Breast epithelium (tissue), 4 donors: ENCODE measurements at regions of chr6 and their contacts with region 1.

Region 1: GRCh38 chr6:89080542-89081422 is at the start of gene PNRC1:
- DNase-seq: peak; percentile 100
- H3K4me3 ChIP-seq: peak within 1 kb of the TSS; percentile 74 to 100 (median 96)
- H3K27ac ChIP-seq: peak within 1 kb of the TSS; percentile 96 to 100
- H3K4me1 ChIP-seq: peaks cover 0 to 3% of the 10 kb centered on the region in 2 donors
- H3K27me3 ChIP-seq: no peaks in the 10 kb centered on the region
- CTCF ChIP-seq: no peak
- POLR2A ChIP-seq: peak; percentile 99
- total RNA-seq, gene PNRC1: 221 to 290 (median 230) TPM

Region 2: DNA sequence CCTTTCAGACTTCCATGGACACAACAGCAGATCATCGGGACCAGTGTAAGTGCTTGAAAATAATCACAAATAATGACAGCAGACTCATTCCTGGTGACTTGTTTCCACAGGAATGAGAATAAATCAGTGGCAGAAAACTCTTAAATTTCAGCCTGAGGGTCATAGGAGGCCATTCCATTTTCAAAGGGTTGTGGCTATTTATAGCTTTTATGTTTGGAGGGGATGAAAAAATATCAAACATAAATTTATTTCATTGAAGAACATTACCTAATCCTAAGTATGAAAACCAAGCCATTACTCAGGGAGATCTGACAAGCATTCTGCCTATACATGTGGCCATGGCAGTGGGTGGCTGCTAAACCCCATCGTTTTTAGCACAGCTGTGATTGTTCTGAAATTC is 741.0 kb before region 1 on chr6:
- intact Hi-C with region 1: no loop called
- DNase-seq: no peak
- H3K4me3 ChIP-seq: no peak overlapping the region
- H3K27ac ChIP-seq: no peak overlapping the region
- H3K4me1 ChIP-seq: no peaks in the 10 kb centered on the region
- H3K27me3 ChIP-seq: no peaks in the 10 kb centered on the region
- CTCF ChIP-seq: no peak
- POLR2A ChIP-seq: no peak

Region 3: DNA sequence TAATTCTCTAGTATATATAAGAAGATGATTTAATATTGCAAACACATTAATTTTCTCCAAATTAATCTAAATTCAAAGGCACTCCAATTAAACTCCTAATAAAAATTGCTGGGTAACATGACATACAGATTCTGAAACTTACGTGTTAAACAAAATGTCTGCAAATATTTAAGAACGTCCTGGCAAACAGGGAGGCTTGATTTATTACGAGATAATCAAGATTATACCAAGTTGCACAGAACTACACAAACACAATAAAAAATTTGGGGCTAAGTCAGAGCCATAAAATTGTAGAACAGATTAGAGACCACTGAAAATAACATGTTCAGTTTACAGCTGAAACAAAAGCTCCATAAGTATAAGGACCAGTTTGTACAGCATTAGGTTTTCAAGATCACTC is 283.8 kb before region 1 on chr6:
- intact Hi-C with region 1: no loop called
- DNase-seq: no peak
- H3K4me3 ChIP-seq: no peak overlapping the region
- H3K27ac ChIP-seq: no peak overlapping the region
- H3K4me1 ChIP-seq: no peaks in the 10 kb centered on the region
- H3K27me3 ChIP-seq: no peaks in the 10 kb centered on the region
- CTCF ChIP-seq: no peak
- POLR2A ChIP-seq: no peak

Region 4: GRCh38 chr6:89035252-89036106 is 45.3 kb before region 1 on chr6:
- intact Hi-C with region 1: loop called (anchors 10 kb)
- DNase-seq: peak; percentile 70 to 93
- H3K4me3 ChIP-seq: peak overlapping the region in 2 of 3 donors; percentile 11 to 54
- H3K27ac ChIP-seq: peak overlapping the region; percentile 93 to 97
- H3K4me1 ChIP-seq: peaks cover 0 to 5% of the 10 kb centered on the region in 2 donors
- H3K27me3 ChIP-seq: no peaks in the 10 kb centered on the region
- CTCF ChIP-seq: peak in 1 of 3 donors; percentile 51
- POLR2A ChIP-seq: peak; percentile 10

Region 5: GRCh38 chr6:89110284-89110683 is 29.5 kb after region 1 on chr6:
- intact Hi-C with region 1: no loop called
- DNase-seq: no peak
- H3K4me3 ChIP-seq: no peak overlapping the region
- H3K27ac ChIP-seq: no peak overlapping the region
- H3K4me1 ChIP-seq: no peaks in the 10 kb centered on the region
- H3K27me3 ChIP-seq: no peaks in the 10 kb centered on the region
- CTCF ChIP-seq: no peak
- POLR2A ChIP-seq: no peak